CD4-positive, alpha-beta memory T cell (primary cell): ENCODE measurements at regions of chr2 and their contacts with region 1.

Region 1: DNA sequence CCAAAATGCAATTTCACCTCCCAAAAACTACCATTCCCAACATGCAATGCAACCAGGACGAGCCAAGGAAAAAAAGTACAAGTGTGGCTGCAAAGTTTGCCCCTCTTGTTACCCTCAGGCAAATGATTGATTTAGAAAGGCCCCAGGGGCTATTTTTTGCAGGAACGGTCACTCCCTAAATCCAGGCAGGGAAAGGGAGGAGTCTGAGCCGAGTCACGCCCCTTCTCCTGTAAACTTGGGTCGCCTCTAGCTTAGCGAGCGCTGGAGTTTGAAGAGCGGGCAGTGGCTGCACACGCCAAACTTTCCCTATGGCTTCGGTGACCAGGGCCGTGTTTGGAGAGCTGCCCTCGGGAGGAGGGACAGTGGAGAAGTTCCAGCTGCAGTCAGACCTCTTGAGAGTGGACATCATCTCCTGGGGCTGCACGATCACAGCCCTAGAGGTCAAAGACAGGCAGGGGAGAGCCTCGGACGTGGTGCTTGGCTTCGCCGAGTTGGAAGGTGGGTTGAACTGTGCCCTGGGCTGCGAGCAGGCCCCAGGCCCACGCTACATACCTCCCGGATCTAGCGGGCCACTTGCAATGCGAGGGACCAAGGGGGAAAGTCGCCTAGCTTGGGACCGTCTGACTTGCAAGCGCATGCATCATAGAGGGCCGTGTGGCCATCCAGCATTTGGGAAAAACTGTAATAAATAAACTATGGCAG is at the start of gene GALM:
- DNase-seq: peak; percentile 51 to 68 (median 62)
- H3K4me3 ChIP-seq: peak within 1 kb of the TSS; percentile 63 to 74
- H3K4me3 Mint-ChIP-seq: peak within 1 kb of the TSS; percentile 81 to 97 (median 94)
- H3K27ac ChIP-seq: peak within 1 kb of the TSS; percentile 73
- H3K27ac Mint-ChIP-seq: peak within 1 kb of the TSS; percentile 93 to 100 (median 98)
- H3K4me1 ChIP-seq: peaks cover 73% of the 10 kb centered on the region
- H3K4me1 Mint-ChIP-seq: peaks cover 47 to 80% (median 64%) of the 10 kb centered on the region in 4 donors
- H3K27me3 ChIP-seq: no peaks in the 10 kb centered on the region
- H3K27me3 Mint-ChIP-seq: no peaks in the 10 kb centered on the region
- total RNA-seq, gene GALM: 35.5 to 35.8 TPM

Region 2: GRCh38 chr2:38610851-38611801 is 54.9 kb before region 1 on chr2:
- CTCF ChIA-PET with region 1: interaction called, 99 read pairs
- POLR2A ChIA-PET with region 1: interaction called, 38 read pairs
- intact Hi-C with region 1: no loop called
- DNase-seq: peak in 1 of 5 donors; percentile 47
- H3K4me3 ChIP-seq: peak overlapping the region in 1 of 2 donors; percentile 14
- H3K4me3 Mint-ChIP-seq: peak overlapping the region in 5 of 8 donors; percentile 43 to 82 (median 63)
- H3K27ac ChIP-seq: no peak overlapping the region
- H3K27ac Mint-ChIP-seq: peak overlapping the region in 3 of 7 donors; percentile 43 to 60 (median 53)
- H3K4me1 ChIP-seq: peaks cover 43% of the 10 kb centered on the region
- H3K4me1 Mint-ChIP-seq: peaks cover 16 to 53% (median 30%) of the 10 kb centered on the region in 4 donors
- H3K27me3 ChIP-seq: no peaks in the 10 kb centered on the region
- H3K27me3 Mint-ChIP-seq: no peaks in the 10 kb centered on the region

Region 3: DNA sequence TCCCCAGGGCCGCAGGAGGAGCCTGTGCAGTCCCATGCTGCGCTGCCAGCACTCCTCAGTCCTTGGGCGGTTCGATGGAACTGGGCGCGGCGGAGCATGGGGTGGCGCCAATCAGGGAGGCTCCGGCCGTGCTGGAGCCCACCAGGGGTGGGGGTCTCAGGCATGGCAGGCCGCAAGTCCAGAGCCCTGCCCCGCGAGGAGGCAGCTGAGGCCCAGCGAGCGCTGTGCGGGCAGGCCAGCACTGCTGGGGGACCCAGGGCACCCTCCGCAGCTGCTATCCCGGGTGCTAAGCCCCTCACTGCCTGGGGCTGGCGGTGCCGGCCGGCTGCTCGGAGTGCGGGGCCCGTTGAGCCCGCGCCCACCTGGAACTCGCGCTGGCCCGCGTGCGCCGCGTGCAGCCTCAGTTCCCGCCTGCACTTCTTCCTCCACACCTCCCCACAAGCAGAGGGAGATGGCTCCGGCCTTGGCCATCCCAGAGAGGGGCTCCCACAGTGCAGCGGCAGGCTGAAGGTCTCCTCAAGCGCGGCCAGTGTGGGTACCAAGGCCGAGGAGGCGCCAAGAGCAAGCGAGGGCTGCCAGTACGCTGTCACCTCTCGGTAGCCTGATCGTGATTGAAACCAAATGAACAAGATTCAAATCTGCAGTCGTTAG is 22.9 kb before region 1 on chr2:
- CTCF ChIA-PET with region 1: interaction called, 8 read pairs
- POLR2A ChIA-PET with region 1: interaction called, 164 read pairs
- intact Hi-C with region 1: no loop called
- DNase-seq: peak in 1 of 5 donors; percentile 5
- H3K4me3 ChIP-seq: peak overlapping the region in 1 of 2 donors; percentile 12
- H3K4me3 Mint-ChIP-seq: peak overlapping the region in 6 of 8 donors; percentile 68 to 89 (median 77)
- H3K27ac ChIP-seq: peak overlapping the region; percentile 51
- H3K27ac Mint-ChIP-seq: peak overlapping the region; percentile 73 to 97 (median 95)
- H3K4me1 ChIP-seq: peaks cover 30% of the 10 kb centered on the region
- H3K4me1 Mint-ChIP-seq: peaks cover 17 to 39% (median 26%) of the 10 kb centered on the region in 4 donors
- H3K27me3 ChIP-seq: no peaks in the 10 kb centered on the region
- H3K27me3 Mint-ChIP-seq: no peaks in the 10 kb centered on the region

Region 4: DNA sequence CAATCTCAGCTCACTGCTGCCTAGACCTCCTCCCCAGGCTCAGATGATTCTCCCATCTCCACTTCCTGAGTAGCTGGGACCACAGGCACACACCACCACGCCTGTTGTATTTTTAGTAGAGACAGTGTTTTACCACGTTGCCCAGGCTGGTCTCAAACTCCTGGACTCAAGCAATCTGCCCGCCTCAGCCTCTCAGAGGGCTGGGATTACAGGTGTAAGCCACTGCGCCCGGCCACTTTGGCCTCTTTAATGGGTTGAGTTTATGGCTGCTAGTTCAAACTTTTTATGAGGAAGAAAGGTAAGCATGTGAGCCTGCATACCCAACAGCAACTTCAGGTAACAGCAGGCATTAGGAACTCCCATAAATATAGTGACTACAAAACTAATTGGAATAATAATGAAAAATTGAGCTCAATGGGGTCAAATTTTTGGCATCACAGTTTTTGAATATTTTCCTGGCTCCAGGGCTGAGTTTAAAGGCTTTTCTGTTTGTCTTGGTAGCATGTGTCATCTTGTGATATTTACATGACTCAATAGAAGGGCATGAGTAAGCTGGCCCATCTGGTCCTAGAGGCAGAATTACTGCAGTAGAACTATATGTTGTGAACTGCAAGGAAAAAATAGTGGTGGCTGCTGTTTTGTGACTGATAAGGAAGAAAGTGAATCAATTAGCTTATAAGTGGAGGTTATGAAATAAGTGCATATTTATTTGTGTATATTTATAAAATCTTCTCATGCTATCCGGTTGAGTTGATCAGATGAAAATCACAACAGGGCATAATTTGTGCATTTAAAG is 24.7 kb after region 1 on chr2:
- CTCF ChIA-PET with region 1: interaction called, 4 read pairs
- POLR2A ChIA-PET with region 1: interaction called, 87 read pairs
- intact Hi-C with region 1: no loop called
- DNase-seq: no peak
- H3K4me3 ChIP-seq: no peak overlapping the region
- H3K4me3 Mint-ChIP-seq: peak overlapping the region in 6 of 8 donors; percentile 46 to 68 (median 60)
- H3K27ac ChIP-seq: no peak overlapping the region
- H3K27ac Mint-ChIP-seq: peak overlapping the region; percentile 44 to 89 (median 82)
- H3K4me1 ChIP-seq: peaks cover 69% of the 10 kb centered on the region
- H3K4me1 Mint-ChIP-seq: peaks cover 44 to 76% (median 59%) of the 10 kb centered on the region in 4 donors
- H3K27me3 ChIP-seq: no peaks in the 10 kb centered on the region
- H3K27me3 Mint-ChIP-seq: no peaks in the 10 kb centered on the region

Region 5: GRCh38 chr2:38709567-38710194 is 43.7 kb after region 1 on chr2:
- CTCF ChIA-PET with region 1: interaction called, 12 read pairs
- POLR2A ChIA-PET with region 1: interaction called, 22 read pairs
- intact Hi-C with region 1: loop called (anchors 1 kb)
- DNase-seq: peak; percentile 81 to 87 (median 84)
- H3K4me3 ChIP-seq: peak overlapping the region in 1 of 2 donors; percentile 13
- H3K4me3 Mint-ChIP-seq: peak overlapping the region; percentile 33 to 90 (median 80)
- H3K27ac ChIP-seq: peak overlapping the region; percentile 46
- H3K27ac Mint-ChIP-seq: peak overlapping the region; percentile 92 to 98 (median 96)
- H3K4me1 ChIP-seq: peaks cover 84% of the 10 kb centered on the region
- H3K4me1 Mint-ChIP-seq: peaks cover 58 to 88% (median 74%) of the 10 kb centered on the region in 4 donors
- H3K27me3 ChIP-seq: no peaks in the 10 kb centered on the region
- H3K27me3 Mint-ChIP-seq: no peaks in the 10 kb centered on the region

Region 6: DNA sequence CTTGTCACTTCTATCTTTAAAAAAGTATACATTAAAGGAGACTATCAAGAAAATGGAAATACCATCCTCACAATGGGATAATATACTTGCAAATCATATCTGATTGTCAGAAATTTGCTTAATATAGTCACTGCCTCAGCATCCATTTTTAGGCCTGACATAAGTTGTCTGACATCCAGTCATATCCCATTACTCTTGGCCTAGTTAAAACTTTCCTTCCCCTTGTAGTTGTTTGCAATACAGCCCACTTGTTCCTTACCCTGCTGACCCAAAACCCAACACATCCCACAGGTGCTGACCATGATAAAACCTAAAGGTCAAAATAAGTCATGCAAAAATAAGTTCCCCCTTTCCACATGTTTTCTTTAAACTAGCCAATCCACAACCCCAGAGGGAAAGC is 220.1 kb after region 1 on chr2:
- CTCF ChIA-PET with region 1: no interaction called
- POLR2A ChIA-PET with region 1: no interaction called
- intact Hi-C with region 1: no loop called
- DNase-seq: no peak
- H3K4me3 ChIP-seq: no peak overlapping the region
- H3K4me3 Mint-ChIP-seq: peak overlapping the region in 1 of 8 donors; percentile 4
- H3K27ac ChIP-seq: no peak overlapping the region
- H3K27ac Mint-ChIP-seq: no peak overlapping the region
- H3K4me1 ChIP-seq: no peaks in the 10 kb centered on the region
- H3K4me1 Mint-ChIP-seq: no peaks in the 10 kb centered on the region
- H3K27me3 ChIP-seq: no peaks in the 10 kb centered on the region
- H3K27me3 Mint-ChIP-seq: peaks cover 0 to 1% of the 10 kb centered on the region in 2 donors